Activated naive CD4-positive, alpha-beta T cell treated with anti-CD3 and anti-CD28 coated beads, Interleukin-2, amount 10 ng/mL, durations not matched to agents 7 days and 5 days (primary cell): ENCODE measurements at regions of chr3 and their contacts with region 1.

Region 1: GRCh38 chr3:53709860-53710674 is 136.2 kb downstream of the CHDH start:
- DNase-seq: peak; percentile 74
- H3K4me3 Mint-ChIP-seq: no peak overlapping the region
- H3K27ac Mint-ChIP-seq: no peak overlapping the region
- H3K4me1 Mint-ChIP-seq: peaks cover 14% of the 10 kb centered on the region
- H3K27me3 Mint-ChIP-seq: peaks cover 17% of the 10 kb centered on the region

Region 2: GRCh38 chr3:53377794-53378193 is 332.3 kb before region 1 on chr3:
- CTCF ChIA-PET with region 1: interaction called, 14 read pairs
- DNase-seq: no peak
- H3K4me3 Mint-ChIP-seq: no peak overlapping the region
- H3K27ac Mint-ChIP-seq: no peak overlapping the region
- H3K4me1 Mint-ChIP-seq: no peaks in the 10 kb centered on the region
- H3K27me3 Mint-ChIP-seq: peaks cover 5% of the 10 kb centered on the region

Region 3: GRCh38 chr3:53696401-53697150 is 13.5 kb before region 1 on chr3:
- CTCF ChIA-PET with region 1: interaction called, 10 read pairs
- DNase-seq: no peak
- H3K4me3 Mint-ChIP-seq: no peak overlapping the region
- H3K27ac Mint-ChIP-seq: no peak overlapping the region
- H3K4me1 Mint-ChIP-seq: peaks cover 19% of the 10 kb centered on the region
- H3K27me3 Mint-ChIP-seq: peaks cover 43% of the 10 kb centered on the region

Region 4: DNA sequence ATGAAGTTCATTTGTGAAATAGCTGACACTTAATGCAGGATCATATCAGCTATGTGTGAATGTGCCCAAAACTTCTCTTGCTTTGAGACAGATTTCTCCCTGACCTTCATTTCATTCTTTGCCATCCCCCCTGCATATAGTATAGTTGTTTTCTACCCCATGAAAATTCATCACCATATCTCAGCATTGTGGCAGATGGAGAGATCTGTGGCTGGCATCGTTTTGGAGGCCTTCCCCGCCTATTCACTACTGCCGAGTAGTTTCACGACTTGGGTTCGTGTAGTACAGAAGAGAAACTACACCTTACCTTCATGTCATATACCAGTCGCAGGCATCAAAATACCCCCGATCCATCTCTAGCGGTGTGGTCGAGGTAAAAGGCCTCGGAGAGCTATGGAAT is 247.8 kb after region 1 on chr3:
- CTCF ChIA-PET with region 1: no interaction called
- DNase-seq: no peak
- H3K4me3 Mint-ChIP-seq: no peak overlapping the region
- H3K27ac Mint-ChIP-seq: no peak overlapping the region
- H3K4me1 Mint-ChIP-seq: no peaks in the 10 kb centered on the region
- H3K27me3 Mint-ChIP-seq: peaks cover 4% of the 10 kb centered on the region